Heart right ventricle (tissue), 16 donors: ENCODE measurements at regions of chr7 and their contacts with region 1.

Region 1: GRCh38 chr7:76108540-76109241 is 60.8 kb downstream of the MDH2 start:
- DNase-seq: peak in 1 of 2 donors; percentile 13
- ATAC-seq: peak in 5 of 8 donors; percentile 34 to 74 (median 61)
- H3K4me3 ChIP-seq: no peak overlapping the region
- H3K27ac ChIP-seq: no peak overlapping the region
- H3K4me1 ChIP-seq: peaks cover 0 to 8% (median 0%) of the 10 kb centered on the region in 9 donors
- H3K27me3 ChIP-seq: no peaks in the 10 kb centered on the region
- CTCF ChIP-seq: no peak

Region 2: DNA sequence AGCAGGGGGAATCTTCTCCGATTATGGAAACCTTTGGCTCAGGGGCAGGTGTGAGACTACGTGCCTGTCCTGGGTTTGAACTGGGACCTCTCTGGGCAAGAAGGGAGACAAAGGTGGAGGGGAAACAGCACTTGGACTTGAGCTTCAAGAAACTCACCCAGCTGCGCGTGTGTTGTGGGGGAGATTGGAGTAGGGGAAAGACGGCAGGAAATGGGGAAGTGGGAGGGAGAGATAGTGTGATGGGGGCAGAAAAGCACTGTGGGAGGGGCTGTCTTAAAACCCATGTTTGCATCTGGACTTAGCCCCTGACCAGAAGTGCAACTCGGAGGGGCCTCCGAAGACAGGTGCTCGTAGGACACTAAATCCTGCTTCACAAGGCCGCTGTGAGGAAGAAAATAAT is 477.0 kb before region 1 on chr7:
- intact Hi-C with region 1: loop called in 1 of 10 experiments (anchors 5 kb)
- DNase-seq: no peak
- ATAC-seq: no peak
- H3K4me3 ChIP-seq: no peak overlapping the region
- H3K27ac ChIP-seq: no peak overlapping the region
- H3K4me1 ChIP-seq: peaks cover 0 to 10% (median 3%) of the 10 kb centered on the region in 9 donors
- H3K27me3 ChIP-seq: no peaks in the 10 kb centered on the region
- CTCF ChIP-seq: no peak

Region 3: DNA sequence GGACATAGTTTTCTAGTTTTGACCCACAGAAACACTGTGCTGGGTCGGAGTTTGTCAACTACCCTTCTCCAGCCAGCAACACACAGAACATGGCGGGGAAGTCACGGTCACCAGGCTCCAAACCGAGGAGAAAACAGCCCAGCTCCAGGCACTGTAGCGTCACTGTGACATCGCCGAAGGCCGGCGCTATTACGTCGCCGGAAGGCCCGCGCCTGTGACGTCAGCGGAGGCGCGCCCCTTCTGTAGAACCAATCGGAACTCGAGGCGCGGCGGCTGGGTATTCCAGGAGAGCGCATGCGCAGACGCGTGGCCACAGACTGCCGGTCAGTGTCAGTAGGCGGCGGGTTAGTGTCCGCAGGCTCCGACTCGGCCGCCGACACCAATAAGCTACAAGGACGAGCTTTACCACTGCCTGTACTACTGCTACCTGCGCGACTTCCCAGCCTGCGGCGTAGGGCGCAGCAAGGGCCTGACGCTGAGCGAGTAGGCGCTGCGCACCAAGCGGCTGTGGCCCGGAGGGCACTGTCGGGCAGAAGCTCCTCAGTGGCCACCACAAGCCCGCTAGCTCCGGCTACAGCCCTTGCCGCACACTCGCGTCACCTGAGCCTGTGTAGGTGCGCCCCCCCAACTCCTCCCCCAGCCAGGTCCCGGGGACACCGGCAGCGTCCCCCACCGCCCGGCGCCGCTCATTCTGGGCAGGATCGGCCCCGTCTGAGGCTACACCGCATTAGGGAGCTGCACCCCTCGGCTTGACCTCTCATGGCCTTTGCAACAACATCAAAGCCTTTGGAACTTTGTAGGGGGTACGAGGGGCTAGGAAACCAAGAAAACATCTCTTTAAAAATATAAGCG is 57.9 kb after region 1 on chr7:
- intact Hi-C with region 1: no loop called
- DNase-seq: peak; percentile 97 to 99
- ATAC-seq: peak; percentile 97 to 99 (median 98)
- H3K4me3 ChIP-seq: peak overlapping the region; percentile 36 to 77 (median 66)
- H3K27ac ChIP-seq: peak overlapping the region; percentile 80 to 93 (median 90)
- H3K4me1 ChIP-seq: peaks cover 0 to 9% (median 4%) of the 10 kb centered on the region in 9 donors
- H3K27me3 ChIP-seq: no peaks in the 10 kb centered on the region
- CTCF ChIP-seq: peak in 6 of 9 donors; percentile 3 to 52 (median 28)

Region 4: DNA sequence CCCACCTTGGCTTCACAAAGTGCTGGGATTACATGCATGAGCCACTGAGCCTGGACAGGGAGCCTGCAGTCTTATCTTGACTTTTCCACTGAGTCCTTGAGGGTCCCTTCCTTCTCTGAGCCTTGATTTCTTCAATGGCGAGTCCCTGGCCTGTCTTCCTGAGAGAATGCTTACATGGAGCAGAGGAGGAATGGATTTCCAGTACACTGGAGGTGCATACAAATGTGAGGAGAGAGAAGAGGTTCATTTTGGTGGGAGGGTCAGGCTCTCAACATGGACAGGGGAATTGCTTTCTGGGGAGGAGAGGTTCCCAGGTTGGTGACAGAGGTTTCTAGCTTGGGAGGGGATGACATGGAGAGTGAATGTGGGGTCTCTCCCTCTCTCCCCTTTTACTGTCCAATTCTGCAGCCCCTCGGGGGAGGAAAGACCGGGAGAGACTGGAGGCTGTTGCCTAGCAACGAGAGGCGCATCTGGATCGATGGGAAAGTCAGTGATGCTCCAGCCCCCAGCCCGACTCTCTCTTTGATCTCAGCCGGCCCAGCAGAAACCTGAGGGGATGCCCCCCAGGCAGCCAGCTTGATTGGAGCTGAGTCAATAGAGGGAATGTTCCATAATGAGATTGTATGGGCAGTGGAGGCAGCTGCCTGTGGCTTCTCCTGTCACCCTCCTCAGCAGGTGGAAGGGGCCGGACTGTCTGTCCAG is 107.8 kb after region 1 on chr7:
- intact Hi-C with region 1: no loop called
- DNase-seq: no peak
- ATAC-seq: no peak
- H3K4me3 ChIP-seq: no peak overlapping the region
- H3K27ac ChIP-seq: no peak overlapping the region
- H3K4me1 ChIP-seq: peaks cover 0 to 5% (median 0%) of the 10 kb centered on the region in 9 donors
- H3K27me3 ChIP-seq: peaks cover 0 to 81% (median 49%) of the 10 kb centered on the region in 7 donors
- CTCF ChIP-seq: no peak